Breast epithelium (tissue), 4 donors: ENCODE measurements at regions of chr5 and their contacts with region 1.

Region 1: GRCh38 chr5:149228618-149229297 is 42.9 kb upstream of the AFAP1L1 start:
- DNase-seq: no peak
- H3K4me3 ChIP-seq: no peak overlapping the region
- H3K27ac ChIP-seq: no peak overlapping the region
- H3K4me1 ChIP-seq: no peaks in the 10 kb centered on the region
- H3K27me3 ChIP-seq: no peaks in the 10 kb centered on the region
- CTCF ChIP-seq: peak in 2 of 3 donors; percentile 48 to 83
- POLR2A ChIP-seq: no peak

Region 2: GRCh38 chr5:149153751-149154610 is 74.8 kb before region 1 on chr5:
- intact Hi-C with region 1: loop called (anchors 10 kb)
- DNase-seq: no peak
- H3K4me3 ChIP-seq: no peak overlapping the region
- H3K27ac ChIP-seq: peak overlapping the region; percentile 15 to 86
- H3K4me1 ChIP-seq: no peaks in the 10 kb centered on the region
- H3K27me3 ChIP-seq: no peaks in the 10 kb centered on the region
- CTCF ChIP-seq: no peak
- POLR2A ChIP-seq: no peak